Activated T-helper 1 cell treated with anti-CD3 and anti-CD28 coated beads, Interleukin-12 subunit alpha, Interleukin-12 subunit beta, Interleukin-2, Interleukin-4 antibody, amounts not matched to agents 30 ng/mL and 10 ng/mL and 1 ng/mL, durations not matched to agents 14 hours and 24 hours and 36 hours (primary cell): ENCODE measurements at regions of chr11 and their contacts with region 1.

Region 1: DNA sequence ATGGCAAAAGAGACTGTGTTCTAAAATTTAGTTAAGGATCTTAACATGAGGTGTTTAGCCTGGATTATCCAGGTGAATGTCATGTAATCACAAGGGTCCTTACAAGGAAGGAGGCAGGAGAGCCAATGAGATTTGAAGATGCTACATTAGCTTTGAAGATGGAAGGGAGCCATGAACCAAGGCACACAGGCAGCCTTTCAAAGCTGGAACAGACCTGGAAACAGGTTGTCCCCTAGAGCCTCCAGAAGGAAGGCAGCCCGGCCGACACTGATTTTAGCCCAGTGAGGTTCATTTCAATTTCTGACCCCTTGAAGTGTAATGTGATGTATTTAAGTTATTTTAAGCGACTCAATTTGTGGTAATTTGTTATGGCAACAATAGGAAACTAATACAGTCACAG is 195.3 kb upstream of the MTMR2 start:
- DNase-seq: no peak
- H3K4me3 Mint-ChIP-seq: no peak overlapping the region
- H3K27ac Mint-ChIP-seq: no peak overlapping the region
- H3K4me1 Mint-ChIP-seq: peaks cover 4% of the 10 kb centered on the region
- H3K27me3 Mint-ChIP-seq: no peaks in the 10 kb centered on the region

Region 2: GRCh38 chr11:95991545-95991944 is 127.7 kb before region 1 on chr11:
- intact Hi-C with region 1: no loop called
- DNase-seq: no peak
- H3K4me3 Mint-ChIP-seq: no peak overlapping the region
- H3K27ac Mint-ChIP-seq: no peak overlapping the region
- H3K4me1 Mint-ChIP-seq: peaks cover 14% of the 10 kb centered on the region
- H3K27me3 Mint-ChIP-seq: no peaks in the 10 kb centered on the region

Region 3: DNA sequence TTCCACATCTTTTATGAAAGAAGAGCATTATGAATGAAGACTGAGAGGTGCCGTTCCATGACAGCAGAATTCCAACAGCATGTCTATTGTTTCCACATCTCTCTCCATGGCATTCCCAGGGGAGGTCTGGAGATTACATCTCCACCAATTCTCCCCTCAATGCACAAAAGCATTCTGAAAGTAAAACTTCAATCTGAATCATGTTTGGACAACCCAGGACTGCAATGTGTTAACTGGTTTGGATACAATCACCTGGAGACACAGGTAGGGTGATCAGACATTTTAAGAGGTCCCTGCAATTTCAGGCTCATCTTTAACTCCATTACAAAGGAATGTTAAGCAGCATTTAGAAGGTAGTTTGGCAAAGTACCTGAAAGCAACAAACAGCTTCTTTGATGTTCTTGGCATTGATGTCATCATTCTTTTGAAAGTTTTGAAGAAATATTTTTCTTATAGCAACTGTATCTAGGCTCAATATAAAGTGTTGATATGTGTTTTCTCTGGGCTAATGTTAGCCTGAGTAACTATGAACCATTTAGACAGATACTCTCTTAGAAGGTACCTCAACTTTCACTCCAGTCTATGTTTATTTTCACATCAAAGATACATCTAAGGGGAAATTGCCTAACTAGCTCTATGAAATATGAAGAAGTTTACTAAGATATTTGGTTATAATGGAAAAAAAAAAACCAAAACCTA is 13.9 kb before region 1 on chr11:
- intact Hi-C with region 1: loop called (anchors 2 kb)
- DNase-seq: no peak
- H3K4me3 Mint-ChIP-seq: no peak overlapping the region
- H3K27ac Mint-ChIP-seq: no peak overlapping the region
- H3K4me1 Mint-ChIP-seq: peaks cover 12% of the 10 kb centered on the region
- H3K27me3 Mint-ChIP-seq: no peaks in the 10 kb centered on the region

Region 4: DNA sequence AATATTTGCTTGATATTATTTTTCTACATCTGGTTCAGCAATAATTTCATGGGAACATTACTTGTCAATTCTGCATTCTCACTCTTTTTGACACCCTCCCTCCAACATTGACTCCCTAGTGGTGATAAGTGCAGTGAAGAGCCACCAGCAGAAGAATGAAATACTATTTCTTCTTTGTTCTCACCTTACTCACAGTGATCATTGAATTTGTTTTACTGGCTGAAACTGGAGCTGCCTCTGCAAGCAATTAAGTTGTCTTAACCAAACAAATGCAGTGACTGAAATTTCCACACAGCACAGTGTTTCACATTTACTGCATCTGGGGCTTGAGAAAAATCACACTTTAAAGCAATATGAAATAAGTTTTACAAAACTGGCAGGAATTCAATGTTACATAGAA is 460.4 kb after region 1 on chr11:
- intact Hi-C with region 1: no loop called
- DNase-seq: no peak
- H3K4me3 Mint-ChIP-seq: no peak overlapping the region
- H3K27ac Mint-ChIP-seq: no peak overlapping the region
- H3K4me1 Mint-ChIP-seq: no peaks in the 10 kb centered on the region
- H3K27me3 Mint-ChIP-seq: peaks cover 3% of the 10 kb centered on the region

Region 5: GRCh38 chr11:97269527-97269926 is 1150.3 kb after region 1 on chr11:
- intact Hi-C with region 1: no loop called
- DNase-seq: no peak
- H3K4me3 Mint-ChIP-seq: no peak overlapping the region
- H3K27ac Mint-ChIP-seq: no peak overlapping the region
- H3K4me1 Mint-ChIP-seq: no peaks in the 10 kb centered on the region
- H3K27me3 Mint-ChIP-seq: no peaks in the 10 kb centered on the region